Motor neuron (in vitro differentiated cells): ENCODE measurements at regions of chr15 and their contacts with region 1.

Region 1: DNA sequence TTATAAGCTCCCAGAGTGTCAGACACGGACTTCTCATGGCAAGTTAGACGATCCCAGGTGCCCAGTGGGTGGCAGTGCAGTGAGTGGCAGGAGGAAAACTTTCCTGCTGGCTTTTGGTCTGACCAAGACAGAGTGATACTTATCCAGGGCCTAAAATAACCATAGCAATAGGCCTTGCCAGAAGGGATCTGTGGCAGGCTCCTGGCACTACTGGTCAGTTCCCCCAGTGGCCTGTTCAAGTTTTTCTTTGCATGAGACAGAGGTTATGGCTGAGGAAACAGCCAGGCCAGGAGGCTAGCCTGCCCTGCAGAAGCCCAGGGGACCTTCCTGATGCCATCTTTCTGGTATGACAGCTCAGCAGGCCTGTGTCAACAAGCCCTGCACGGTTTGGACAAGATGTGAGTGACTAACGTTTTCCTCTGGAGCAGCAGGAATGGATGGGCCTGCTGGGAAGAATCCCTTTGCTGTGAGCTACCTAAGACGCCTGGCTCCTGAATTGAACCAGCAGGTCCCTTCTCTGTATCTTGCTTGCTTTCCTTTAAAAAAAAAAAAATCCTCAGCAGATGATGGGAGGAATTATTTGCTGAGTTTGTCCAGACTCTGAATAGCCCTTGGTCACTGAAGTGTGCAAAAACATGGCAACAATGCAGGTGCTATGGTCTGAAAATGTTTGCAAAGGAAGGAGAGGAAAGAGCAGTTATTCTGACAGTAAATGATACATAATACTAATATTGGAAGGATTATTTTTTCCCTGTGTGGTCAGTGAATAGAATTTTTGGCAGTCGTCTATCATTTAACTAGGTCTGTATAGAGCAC is 18.0 kb downstream of the SCG5 start:
- ATAC-seq: peak in 6 of 8 experiments; percentile 37 to 87 (median 66)
- H3K4me3 ChIP-seq: no peak overlapping the region
- H3K27ac ChIP-seq: no peak overlapping the region
- H3K4me1 ChIP-seq: no peaks in the 10 kb centered on the region

Region 2: DNA sequence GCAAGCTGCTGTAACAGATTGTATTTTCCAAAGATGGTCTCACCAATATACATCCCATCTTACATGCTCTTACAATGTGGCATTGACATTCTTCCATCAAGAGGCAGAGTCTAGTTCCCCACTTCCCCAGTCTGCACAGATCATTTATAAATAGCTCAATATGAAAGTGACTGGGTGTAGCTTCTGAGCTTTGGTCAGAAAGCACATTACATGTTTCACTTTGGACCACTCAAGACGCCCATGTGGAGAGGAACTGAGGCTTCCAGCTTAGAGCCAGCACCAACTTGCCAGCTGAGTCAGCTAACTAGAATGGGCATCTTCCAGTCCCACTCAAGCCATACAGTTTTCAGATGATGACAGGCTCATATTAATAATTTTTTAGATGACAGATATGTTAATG is 103.7 kb after region 1 on chr15:
- in situ Hi-C with region 1: no loop called
- ATAC-seq: no peak
- H3K4me3 ChIP-seq: no peak overlapping the region
- H3K27ac ChIP-seq: no peak overlapping the region
- H3K4me1 ChIP-seq: no peaks in the 10 kb centered on the region

Region 3: GRCh38 chr15:32994810-32995424 is 335.4 kb after region 1 on chr15:
- in situ Hi-C with region 1: loop called in 8 of 9 experiments (anchors 10 to 25 kb)
- ATAC-seq: peak in 4 of 8 experiments; percentile 39 to 47 (median 42)
- H3K4me3 ChIP-seq: no peak overlapping the region
- H3K27ac ChIP-seq: no peak overlapping the region
- H3K4me1 ChIP-seq: peaks cover 3 to 5% of the 10 kb centered on the region in 2 donors